BJ (cell line): ENCODE measurements at regions of chr4 and their contacts with region 1.

Region 1: GRCh38 chr4:82360298-82361177 is 13.3 kb downstream of the HNRNPD start:
- DNase-seq: no peak
- H3K4me3 ChIP-seq: no peak overlapping the region
- H3K27me3 ChIP-seq: no peaks in the 10 kb centered on the region
- CTCF ChIP-seq: peak; percentile 67

Region 2: DNA sequence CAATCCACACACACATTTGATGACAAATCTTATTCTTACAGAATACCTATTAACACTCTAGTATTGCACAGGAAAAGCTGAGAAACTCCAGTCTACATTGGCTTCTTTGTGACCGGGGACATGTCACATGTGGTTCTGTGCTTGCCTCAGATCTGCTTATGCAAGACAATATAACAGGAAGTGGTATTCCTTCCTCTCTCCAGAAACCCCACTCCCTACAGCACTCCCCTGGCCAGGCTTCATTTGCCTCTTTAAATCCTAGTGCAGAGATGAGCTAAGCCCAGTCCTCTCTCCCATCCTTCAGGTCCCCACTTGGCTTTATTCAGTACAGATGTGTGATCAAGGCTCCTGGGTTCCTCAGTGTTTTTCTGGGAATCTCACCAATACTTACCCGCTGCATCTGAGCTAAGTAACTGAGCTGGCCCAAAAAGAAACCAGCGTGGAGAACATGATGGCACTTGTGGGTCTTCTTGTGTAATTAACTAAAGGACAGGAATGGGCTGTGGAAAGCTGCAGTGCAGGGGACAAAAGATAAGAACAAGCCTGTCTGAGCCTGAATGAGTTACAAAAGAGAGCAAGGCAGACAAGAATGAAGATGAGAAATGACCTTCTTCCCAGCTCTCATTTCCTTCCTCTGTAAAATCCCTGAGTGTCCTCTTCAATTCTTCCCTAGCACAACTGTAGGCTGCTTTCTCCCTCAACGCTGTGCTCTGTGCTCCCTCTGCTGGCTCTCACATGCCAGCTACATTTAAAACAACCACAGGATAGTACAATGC is 92.3 kb before region 1 on chr4:
- CTCF ChIA-PET with region 1: interaction called, 13 read pairs
- POLR2A ChIA-PET with region 1: no interaction called
- DNase-seq: peak; percentile 2
- H3K4me3 ChIP-seq: no peak overlapping the region
- H3K27me3 ChIP-seq: 0 out of 2 replicates have a peak, but pooled peaks cover 2% of the 10 kb centered on the region
- CTCF ChIP-seq: peak; percentile 80

Region 3: DNA sequence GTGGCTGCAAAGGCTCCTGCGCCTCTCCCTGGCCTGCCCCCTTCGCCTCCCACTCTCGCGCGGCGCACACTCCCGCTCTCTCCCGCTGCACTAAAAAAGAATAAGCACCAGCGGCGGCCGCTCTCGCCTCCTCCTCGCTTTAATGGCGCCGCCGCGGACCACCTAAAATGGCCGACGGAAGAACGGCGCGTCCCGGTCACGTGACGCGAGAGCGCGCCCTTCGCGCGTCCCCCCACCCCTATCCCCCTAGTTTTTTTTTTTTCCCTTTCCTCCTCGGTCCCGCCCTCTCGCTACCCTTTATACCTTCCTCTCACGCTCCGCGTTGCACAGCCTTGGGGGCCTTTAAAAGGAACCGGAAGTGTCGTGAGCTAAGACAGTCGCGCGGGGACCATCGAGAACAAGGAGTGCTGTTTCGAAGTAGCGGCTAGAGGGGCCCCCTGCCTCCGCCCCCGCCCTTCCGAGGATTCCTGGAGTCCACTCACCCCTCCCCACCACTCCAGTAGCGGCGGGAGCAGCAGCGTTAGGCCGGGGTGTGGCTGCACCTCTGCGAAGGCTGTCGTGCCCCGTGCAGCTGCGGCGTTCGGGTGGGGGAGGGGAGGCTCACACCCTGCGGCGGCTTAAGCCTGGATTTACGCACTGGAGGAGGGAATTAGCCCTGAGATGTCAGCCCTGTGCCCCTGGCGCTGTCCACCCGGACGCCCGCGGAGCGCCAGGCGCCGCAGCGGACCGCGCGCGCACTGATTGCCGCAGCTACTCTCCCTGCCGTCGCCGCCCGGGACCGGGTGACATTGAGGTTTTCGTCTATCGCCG is 13.5 kb after region 1 on chr4 and contains the start of gene HNRNPD:
- CTCF ChIA-PET with region 1: interaction called, 14 read pairs
- POLR2A ChIA-PET with region 1: interaction called, 10 read pairs
- DNase-seq: peak; percentile 96
- H3K4me3 ChIP-seq: peak within 1 kb of the TSS; percentile 85
- H3K27me3 ChIP-seq: no peaks in the 10 kb centered on the region
- CTCF ChIP-seq: no peak
- polyA plus RNA-seq, gene HNRNPD: 40.5 and 41.1 TPM in 2 replicates

Region 4: DNA sequence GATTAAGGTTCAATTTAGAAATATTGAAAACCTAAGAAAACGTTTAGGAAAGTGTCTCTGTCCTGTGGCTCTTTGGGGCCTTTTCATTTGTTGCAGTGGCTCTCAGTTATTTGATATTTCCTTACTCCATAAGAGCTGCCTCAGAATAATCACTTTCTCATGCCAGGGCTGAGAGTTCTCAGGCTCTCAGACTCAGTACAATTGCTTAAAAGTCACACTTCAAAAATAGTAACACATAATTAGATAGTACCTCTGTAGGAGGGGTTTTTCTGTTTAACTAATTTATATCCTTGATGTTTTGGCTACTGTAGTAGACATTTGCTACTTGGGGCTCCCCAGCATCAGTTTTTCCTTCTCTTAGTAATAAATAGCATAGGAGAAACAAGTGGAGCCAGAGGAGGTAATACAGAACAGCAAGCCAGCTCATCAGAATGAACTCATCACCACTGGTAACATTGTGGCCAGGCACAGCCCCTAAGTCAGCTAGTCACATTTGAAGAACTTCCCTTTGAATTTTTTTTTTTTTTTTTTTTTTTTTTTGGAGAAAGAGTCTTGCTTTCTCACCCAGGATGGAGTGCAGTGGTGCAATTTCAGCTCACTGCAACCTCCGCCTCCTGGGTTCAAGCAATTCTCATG is 21.2 kb after region 1 on chr4:
- CTCF ChIA-PET with region 1: interaction called, 5 read pairs
- POLR2A ChIA-PET with region 1: interaction called, 10 read pairs
- DNase-seq: no peak
- H3K4me3 ChIP-seq: no peak overlapping the region
- H3K27me3 ChIP-seq: no peaks in the 10 kb centered on the region
- CTCF ChIP-seq: no peak